ENCODE measurements at regions of chrX and their contacts with region 1.

Region 1: GRCh38 chrX:119004920-119005524 is 30.6 kb downstream of the LONRF3 start:
- DNase-seq: peak; percentile 8 to 74 (median 47)
- ATAC-seq: peak; percentile 71
- H3K4me3 ChIP-seq: no peak overlapping the region
- H3K4me3 Mint-ChIP-seq: no peak overlapping the region
- H3K27ac ChIP-seq: no peak overlapping the region
- H3K27ac Mint-ChIP-seq: no peak overlapping the region
- H3K4me1 ChIP-seq: no peaks in the 10 kb centered on the region
- H3K4me1 Mint-ChIP-seq: peaks cover 4% of the 10 kb centered on the region
- H3K27me3 ChIP-seq: no peaks in the 10 kb centered on the region
- H3K27me3 Mint-ChIP-seq: no peaks in the 10 kb centered on the region
- CTCF ChIP-seq: peak; percentile 64

Region 2: DNA sequence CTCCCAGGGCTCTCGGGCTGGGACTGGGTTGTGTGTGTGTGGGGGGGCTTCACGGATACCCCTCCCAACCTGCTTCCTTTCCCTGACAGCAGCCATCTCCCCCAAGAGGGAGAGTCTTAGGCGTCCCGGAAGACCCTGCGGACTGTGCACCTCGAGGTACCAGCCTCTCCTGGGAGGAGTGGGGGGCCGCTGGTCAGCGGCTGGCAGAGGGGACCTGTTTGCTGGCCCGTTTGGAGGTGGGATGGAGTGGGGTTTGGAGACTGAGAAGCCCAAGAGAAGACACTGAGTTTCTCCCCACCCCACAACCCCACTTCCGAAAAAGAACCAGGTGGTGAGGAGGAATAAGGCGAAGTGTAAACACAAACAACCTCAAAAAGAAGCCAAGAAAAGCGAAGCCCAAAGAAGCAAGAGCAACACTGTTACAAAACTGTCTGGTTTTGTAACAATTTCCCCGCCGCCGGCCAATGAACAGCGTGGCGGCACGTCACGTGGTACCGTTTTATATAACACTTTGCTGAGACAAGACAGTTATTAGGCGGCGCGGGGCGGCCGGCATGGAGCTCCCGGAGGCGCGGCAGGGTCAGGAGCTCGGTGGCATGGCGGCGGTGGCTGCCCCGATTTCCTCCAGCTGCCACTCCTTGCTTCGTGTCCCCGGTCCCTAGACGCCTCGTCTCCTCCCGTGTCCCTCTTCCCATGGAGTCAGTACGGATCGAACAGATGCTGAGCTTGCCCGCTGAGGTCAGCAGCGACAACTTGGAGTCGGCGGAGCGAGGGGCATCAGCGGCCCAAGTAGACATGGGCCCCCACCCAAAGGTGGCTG is 30.7 kb before region 1 on chrX and contains the start of gene LONRF3:
- CTCF ChIA-PET with region 1: interaction called, 3 read pairs
- POLR2A ChIA-PET with region 1: no interaction called
- intact Hi-C with region 1: loop called in 1 of 2 experiments (anchors 2 kb)
- DNase-seq: peak; percentile 26 to 80 (median 63)
- ATAC-seq: peak; percentile 50
- H3K4me3 ChIP-seq: peak within 1 kb of the TSS; percentile 59 to 72
- H3K4me3 Mint-ChIP-seq: peak within 1 kb of the TSS; percentile 87
- H3K27ac ChIP-seq: peak within 1 kb of the TSS; percentile 49 to 70
- H3K27ac Mint-ChIP-seq: peak within 1 kb of the TSS; percentile 91
- H3K4me1 ChIP-seq: peaks cover 6% of the 10 kb centered on the region
- H3K4me1 Mint-ChIP-seq: peaks cover 21% of the 10 kb centered on the region
- H3K27me3 ChIP-seq: no peaks in the 10 kb centered on the region
- H3K27me3 Mint-ChIP-seq: peaks cover 8% of the 10 kb centered on the region
- CTCF ChIP-seq: no peak
- total RNA-seq, gene LONRF3: 3.8 to 4.3 TPM

Region 3: DNA sequence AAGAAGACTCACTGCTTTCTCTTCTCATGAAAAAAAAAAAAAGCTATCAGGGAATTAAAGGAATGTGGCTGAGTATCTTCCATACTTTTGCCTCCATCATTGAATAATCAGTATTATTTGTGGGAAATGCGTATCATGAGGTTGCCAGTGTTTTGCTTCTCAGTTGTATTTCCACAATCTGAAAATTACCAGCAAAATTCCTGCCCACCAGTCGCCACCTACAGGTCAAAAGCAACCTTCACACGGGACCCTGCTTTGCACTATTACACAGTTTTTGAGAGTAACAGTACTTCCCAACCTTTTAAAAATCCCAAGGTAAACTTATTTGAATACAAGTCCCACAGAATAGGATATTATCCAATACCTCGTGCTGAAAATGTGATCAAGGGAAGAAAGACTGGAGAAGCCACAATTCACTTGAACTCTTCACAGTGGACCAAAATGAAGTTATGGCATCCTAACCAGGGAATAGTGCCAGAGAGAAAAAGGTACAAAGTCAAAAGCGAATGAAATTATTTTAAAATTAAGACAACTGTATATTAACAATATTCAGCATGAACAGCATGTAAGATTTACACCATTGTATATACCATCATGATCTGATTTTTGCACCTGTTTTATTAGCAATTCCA is 261.5 kb after region 1 on chrX:
- CTCF ChIA-PET with region 1: no interaction called
- POLR2A ChIA-PET with region 1: no interaction called
- intact Hi-C with region 1: loop called in 1 of 2 experiments (anchors 2 kb)
- DNase-seq: peak in 5 of 9 experiments; percentile 7 to 43 (median 25)
- ATAC-seq: no peak
- H3K4me3 ChIP-seq: no peak overlapping the region
- H3K4me3 Mint-ChIP-seq: no peak overlapping the region
- H3K27ac ChIP-seq: no peak overlapping the region
- H3K27ac Mint-ChIP-seq: no peak overlapping the region
- H3K4me1 ChIP-seq: no peaks in the 10 kb centered on the region
- H3K4me1 Mint-ChIP-seq: no peaks in the 10 kb centered on the region
- H3K27me3 ChIP-seq: no peaks in the 10 kb centered on the region
- H3K27me3 Mint-ChIP-seq: peaks cover 2% of the 10 kb centered on the region
- CTCF ChIP-seq: peak; percentile 61

Measured in CD8-positive, alpha-beta T cell (primary cell).